Gastrocnemius medialis (tissue), 4 donors: ENCODE measurements at regions of chr4 and their contacts with region 1.

Region 1: DNA sequence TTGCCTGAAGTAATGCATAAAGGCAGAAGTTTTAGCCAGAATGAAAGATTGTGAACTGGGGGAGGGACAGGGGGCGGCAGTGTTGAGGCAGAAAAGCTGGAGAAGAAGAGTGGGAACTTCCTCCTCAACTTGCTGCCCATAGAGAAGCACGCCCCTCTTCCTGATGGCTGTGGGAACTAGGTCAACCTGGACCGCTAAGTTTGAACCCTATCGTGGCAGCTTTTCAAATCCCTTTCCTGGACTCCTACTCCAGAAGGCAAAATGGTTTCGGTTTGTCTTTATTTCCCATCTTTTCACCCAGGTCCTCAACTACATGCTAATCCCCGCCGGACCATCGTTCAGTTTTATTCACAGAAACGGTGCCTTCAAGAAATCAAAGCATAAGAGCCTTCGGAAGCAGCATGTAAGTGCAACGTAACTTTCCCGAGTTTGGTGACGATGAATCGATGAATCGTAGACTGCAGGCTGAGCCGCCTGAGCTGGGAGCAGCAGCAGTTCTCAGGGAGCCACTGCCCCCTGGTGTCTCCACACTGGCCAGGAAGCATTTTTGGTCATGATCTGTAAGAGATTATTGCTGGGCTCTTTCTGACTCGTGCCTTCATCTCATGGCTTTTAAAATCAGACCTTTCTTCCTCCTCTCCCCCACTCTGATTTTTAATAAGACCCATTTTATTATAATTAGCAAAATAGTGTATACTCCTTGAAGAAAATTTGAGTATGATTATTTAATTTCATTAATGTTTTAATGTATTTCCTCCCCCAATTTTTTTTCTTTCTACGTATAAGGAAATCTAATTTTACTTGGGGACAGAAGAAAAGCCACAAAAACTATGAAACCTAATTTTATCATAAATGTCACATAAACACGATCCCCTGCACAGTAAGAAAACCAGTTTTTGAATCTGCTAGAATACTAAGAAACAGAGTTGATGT is 21.4 kb downstream of the SPINK2 start:
- DNase-seq: peak; percentile 65 to 71
- ATAC-seq: peak; percentile 98 to 99
- H3K4me3 ChIP-seq: peak overlapping the region; percentile 53 to 78 (median 74)
- H3K27ac ChIP-seq: peak overlapping the region; percentile 22 to 67 (median 58)
- H3K4me1 ChIP-seq: peaks cover 0 to 8% of the 10 kb centered on the region in 2 donors
- H3K27me3 ChIP-seq: no peaks in the 10 kb centered on the region
- CTCF ChIP-seq: peak; percentile 45 to 84 (median 75)
- POLR2A ChIP-seq: no peak

Region 2: GRCh38 chr4:56410235-56411062 is 389.6 kb before region 1 on chr4:
- in situ Hi-C with region 1: loop called in 1 of 4 experiments (anchors 25 kb)
- intact Hi-C with region 1: no loop called
- DNase-seq: peak in 1 of 2 donors; percentile 4
- ATAC-seq: peak; percentile 62 to 72
- H3K4me3 ChIP-seq: peak overlapping the region in 3 of 4 donors; percentile 1 to 22 (median 6)
- H3K27ac ChIP-seq: no peak overlapping the region
- H3K4me1 ChIP-seq: peaks cover 9 to 15% of the 10 kb centered on the region in 2 donors
- H3K27me3 ChIP-seq: no peaks in the 10 kb centered on the region
- CTCF ChIP-seq: no peak
- POLR2A ChIP-seq: no peak

Region 3: DNA sequence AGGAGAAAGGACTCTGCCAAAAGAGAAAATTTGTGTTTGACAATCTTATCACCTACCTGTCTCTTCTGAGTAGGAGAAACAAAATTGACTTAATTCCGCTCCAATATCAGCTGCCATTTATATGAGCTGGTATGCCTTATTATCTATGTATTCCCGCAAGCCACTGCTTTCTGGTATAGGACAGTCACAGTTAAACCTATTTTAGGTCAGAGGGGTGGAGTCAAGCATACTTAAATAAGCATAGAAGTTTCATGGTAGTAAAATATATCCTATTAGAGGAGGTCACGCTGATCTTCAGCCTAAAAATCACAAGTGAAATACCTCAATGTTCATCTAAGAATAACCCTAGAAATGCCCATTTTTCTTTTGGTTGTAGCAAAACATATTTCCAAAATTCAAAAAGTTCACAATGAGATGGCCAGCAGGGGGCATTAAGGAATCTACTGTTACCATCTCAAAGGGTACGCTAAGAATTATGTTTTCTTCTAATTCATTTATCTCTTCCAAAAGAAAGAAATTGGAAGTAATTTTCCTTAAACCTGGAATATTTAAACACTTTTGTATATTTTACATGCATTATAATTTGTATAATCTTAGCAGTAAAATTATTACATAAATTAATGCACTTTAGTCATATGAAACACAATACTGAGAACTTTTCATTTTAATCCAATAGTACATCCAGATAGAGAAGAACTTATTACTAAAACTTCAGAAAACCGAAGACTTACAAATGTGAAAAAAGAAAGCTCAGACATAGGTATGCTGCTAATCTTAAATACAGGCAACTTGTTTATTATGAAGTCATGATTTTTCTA is 375.2 kb before region 1 on chr4:
- in situ Hi-C with region 1: loop called in 1 of 4 experiments (anchors 25 kb)
- intact Hi-C with region 1: loop called (anchors 1 kb)
- DNase-seq: no peak
- ATAC-seq: peak in 1 of 2 donors; percentile 44
- H3K4me3 ChIP-seq: no peak overlapping the region
- H3K27ac ChIP-seq: no peak overlapping the region
- H3K4me1 ChIP-seq: peaks cover 0 to 8% of the 10 kb centered on the region in 2 donors
- H3K27me3 ChIP-seq: no peaks in the 10 kb centered on the region
- CTCF ChIP-seq: peak; percentile 41 to 70 (median 58)
- POLR2A ChIP-seq: no peak

Region 4: GRCh38 chr4:56575820-56576429 is 224.2 kb before region 1 on chr4:
- in situ Hi-C with region 1: loop called in 2 of 4 experiments (anchors 10 kb)
- intact Hi-C with region 1: no loop called
- DNase-seq: no peak
- ATAC-seq: no peak
- H3K4me3 ChIP-seq: no peak overlapping the region
- H3K27ac ChIP-seq: no peak overlapping the region
- H3K4me1 ChIP-seq: no peaks in the 10 kb centered on the region
- H3K27me3 ChIP-seq: no peaks in the 10 kb centered on the region
- CTCF ChIP-seq: peak in 3 of 5 experiments; percentile 15 to 49 (median 44)
- POLR2A ChIP-seq: no peak

Region 5: GRCh38 chr4:56587091-56587490 is 213.0 kb before region 1 on chr4:
- in situ Hi-C with region 1: loop called in 1 of 4 experiments (anchors 10 kb)
- intact Hi-C with region 1: no loop called
- DNase-seq: no peak
- ATAC-seq: no peak
- H3K4me3 ChIP-seq: no peak overlapping the region
- H3K27ac ChIP-seq: no peak overlapping the region
- H3K4me1 ChIP-seq: no peaks in the 10 kb centered on the region
- H3K27me3 ChIP-seq: no peaks in the 10 kb centered on the region
- CTCF ChIP-seq: no peak
- POLR2A ChIP-seq: no peak

Region 6: DNA sequence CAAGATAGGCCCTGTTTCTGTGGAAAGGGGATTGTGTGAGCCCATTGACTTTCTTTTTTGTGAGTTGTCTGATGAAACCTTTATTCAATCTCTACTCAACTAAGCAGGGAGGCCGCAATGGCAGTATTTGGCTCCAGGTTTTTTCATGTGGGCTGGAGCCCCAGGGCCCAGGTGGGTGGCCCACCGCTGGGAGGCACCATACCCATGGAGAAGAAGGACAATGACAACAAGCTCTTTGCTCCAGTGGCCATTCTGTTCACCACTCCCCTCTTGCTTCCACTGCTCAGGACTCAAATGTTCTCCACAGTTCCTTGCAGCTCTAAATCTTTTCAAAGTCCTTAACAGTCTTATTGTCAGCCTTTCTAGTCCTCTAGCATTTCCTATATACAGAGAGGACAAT is 173.1 kb before region 1 on chr4:
- in situ Hi-C with region 1: no loop called
- intact Hi-C with region 1: loop called (anchors 5 kb)
- DNase-seq: no peak
- ATAC-seq: no peak
- H3K4me3 ChIP-seq: no peak overlapping the region
- H3K27ac ChIP-seq: no peak overlapping the region
- H3K4me1 ChIP-seq: no peaks in the 10 kb centered on the region
- H3K27me3 ChIP-seq: no peaks in the 10 kb centered on the region
- CTCF ChIP-seq: no peak
- POLR2A ChIP-seq: no peak

Region 7: DNA sequence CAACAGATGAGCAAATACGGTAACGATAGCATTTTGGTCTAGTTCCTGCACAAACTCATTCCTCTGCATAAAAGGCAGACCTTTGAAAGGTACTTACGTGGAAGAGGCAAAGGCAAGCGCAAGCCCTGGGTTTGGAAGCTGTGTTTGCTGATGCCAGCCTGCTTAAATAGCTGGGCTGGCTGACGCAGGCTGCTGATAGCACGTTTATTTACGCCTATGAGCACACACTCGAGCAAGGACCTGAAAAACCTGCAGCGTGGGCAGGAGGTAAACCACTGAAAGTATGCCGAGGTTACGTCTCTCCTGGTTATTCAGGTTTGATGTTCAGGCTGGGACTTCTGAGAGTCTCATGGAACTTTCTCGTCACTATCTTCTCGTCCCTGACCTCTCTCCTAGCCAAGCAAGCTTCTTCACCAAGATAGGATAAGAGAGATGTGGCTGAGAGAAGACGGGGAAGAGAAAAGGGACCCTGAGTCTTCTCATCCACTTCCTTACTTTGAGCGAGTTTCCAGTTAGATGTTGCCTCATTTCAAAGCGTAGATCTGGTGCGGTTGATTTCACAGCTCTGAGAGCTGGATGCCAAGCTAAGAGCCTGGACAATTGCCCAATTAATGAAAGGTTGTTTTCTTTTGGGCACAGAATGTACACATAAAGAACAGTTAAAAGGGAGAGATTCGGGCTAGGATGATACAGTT is 118.8 kb before region 1 on chr4 and contains the start of gene HOPX:
- in situ Hi-C with region 1: loop called in 1 of 4 experiments (anchors 25 kb)
- intact Hi-C with region 1: no loop called
- DNase-seq: no peak
- ATAC-seq: no peak
- H3K4me3 ChIP-seq: peak within 1 kb of the TSS in 1 of 4 donors; percentile 16
- H3K27ac ChIP-seq: no peak within 1 kb of the TSS
- H3K4me1 ChIP-seq: peaks cover 7 to 8% of the 10 kb centered on the region in 2 donors
- H3K27me3 ChIP-seq: peaks cover 0 to 37% (median 10%) of the 10 kb centered on the region in 3 donors
- CTCF ChIP-seq: no peak
- POLR2A ChIP-seq: no peak
- total RNA-seq, gene HOPX: 5.3 to 6.6 (median 5.7) TPM